ENCODE measurements at regions of chr20 and their contacts with region 1.

Region 1: GRCh38 chr20:2172305-2173175 is 70.9 kb downstream of the STK35 start:
- DNase-seq: peak; percentile 91
- H3K4me3 ChIP-seq: no peak overlapping the region
- H3K27ac ChIP-seq: no peak overlapping the region
- H3K4me1 ChIP-seq: peaks cover 0 to 10% (median 7%) of the 10 kb centered on the region in 6 donors
- H3K27me3 ChIP-seq: peaks cover 0 to 19% (median 0%) of the 10 kb centered on the region in 7 donors
- CTCF ChIP-seq: peak; percentile 74 to 94 (median 86)
- POLR2A ChIP-seq: no peak

Region 2: DNA sequence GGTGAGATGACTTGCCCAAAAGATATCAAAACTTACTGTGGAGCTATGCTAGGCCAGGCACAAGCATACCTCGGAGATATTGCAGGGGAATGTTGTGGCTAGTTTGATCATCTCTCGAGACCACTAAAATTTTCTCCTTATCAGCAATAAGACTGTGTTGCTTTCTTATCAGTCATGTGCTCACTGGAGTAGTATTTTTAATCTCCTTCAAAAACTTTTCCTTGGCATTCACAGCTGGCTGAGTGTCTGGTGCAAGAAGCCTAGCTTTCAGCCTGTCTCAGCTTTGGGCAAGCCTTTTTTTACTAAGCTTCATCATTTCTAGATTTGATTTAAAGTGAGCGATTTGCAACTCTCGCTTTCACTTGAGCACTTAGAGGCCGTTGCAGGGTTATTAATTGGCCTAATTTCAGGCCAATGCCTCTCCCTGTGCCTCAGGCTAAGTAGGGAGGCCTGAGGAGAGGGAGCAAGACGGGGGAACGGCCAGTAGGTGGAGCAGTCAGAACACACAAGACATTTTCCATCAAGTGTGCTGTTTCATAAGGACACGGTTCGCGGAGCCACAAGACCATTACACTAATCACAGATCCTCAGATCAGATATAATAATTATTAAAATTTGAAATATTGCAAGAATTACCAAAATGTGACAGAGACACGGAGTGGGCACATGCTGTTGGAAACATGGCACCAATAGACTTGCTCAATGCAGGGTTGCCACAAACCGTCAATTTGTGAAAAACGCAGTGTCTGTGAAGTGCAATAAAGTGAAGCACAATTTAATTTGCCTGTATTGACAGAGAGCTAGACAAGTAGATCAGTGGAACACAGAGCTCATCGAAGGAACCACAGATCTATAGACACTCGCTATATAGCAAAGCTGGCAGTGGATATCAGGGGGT is 408.2 kb before region 1 on chr20:
- intact Hi-C with region 1: loop called (anchors 10 kb)
- DNase-seq: peak; percentile 87
- H3K4me3 ChIP-seq: no peak overlapping the region
- H3K27ac ChIP-seq: no peak overlapping the region
- H3K4me1 ChIP-seq: peaks cover 0 to 9% (median 4%) of the 10 kb centered on the region in 6 donors
- H3K27me3 ChIP-seq: peaks cover 0 to 5% (median 0%) of the 10 kb centered on the region in 7 donors
- CTCF ChIP-seq: peak; percentile 34 to 89 (median 77)
- POLR2A ChIP-seq: no peak

Region 3: DNA sequence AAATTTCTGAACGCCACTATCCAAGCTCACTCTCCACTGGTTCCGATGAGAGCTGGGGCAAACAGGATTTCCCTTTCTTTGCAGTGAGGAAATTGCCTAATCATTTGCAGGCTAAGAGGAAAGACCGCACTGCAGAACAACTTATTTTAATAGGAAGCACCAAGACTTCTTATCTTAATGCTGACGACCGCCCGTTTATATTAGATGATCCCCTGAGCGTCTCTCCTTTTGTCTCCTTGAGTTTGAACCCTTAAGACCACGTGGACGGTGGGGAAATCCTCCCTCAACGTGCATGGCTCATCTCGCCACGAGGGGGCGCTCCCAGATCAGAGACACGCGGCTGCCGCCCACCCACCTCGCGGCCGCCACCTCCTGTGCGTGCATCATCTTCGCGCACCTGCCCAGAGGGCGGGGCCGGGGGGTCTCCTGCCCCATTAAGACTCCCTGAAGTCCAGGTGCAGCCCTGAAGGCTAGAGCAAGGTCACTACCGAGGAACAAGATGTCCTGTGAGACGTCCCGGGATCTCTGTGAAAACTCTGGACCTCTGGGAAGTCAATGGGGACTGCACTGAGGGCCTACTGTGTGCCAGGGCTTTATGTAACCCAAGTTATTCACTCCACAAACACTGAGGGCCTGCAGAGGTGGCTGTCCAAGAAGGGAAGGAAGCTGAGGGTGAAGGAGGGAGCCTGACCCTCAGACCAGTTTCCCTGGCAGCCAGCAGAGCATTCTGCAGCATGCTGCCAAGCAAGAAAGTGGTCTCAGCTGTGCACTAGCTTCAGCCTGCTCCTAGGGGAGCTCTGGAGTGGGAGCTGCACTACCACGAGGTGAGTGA is 206.8 kb before region 1 on chr20:
- intact Hi-C with region 1: loop called (anchors 5 kb)
- DNase-seq: peak; percentile 92
- H3K4me3 ChIP-seq: peak overlapping the region in 5 of 8 donors; percentile 4 to 52 (median 20)
- H3K27ac ChIP-seq: peak overlapping the region in 7 of 8 donors; percentile 44 to 85 (median 74)
- H3K4me1 ChIP-seq: peaks cover 6 to 35% (median 18%) of the 10 kb centered on the region in 6 donors
- H3K27me3 ChIP-seq: peaks cover 0 to 20% (median 0%) of the 10 kb centered on the region in 7 donors
- CTCF ChIP-seq: peak; percentile 81 to 94 (median 90)
- POLR2A ChIP-seq: no peak